ENCODE measurements at regions of chr10 and their contacts with region 1.

Region 1: DNA sequence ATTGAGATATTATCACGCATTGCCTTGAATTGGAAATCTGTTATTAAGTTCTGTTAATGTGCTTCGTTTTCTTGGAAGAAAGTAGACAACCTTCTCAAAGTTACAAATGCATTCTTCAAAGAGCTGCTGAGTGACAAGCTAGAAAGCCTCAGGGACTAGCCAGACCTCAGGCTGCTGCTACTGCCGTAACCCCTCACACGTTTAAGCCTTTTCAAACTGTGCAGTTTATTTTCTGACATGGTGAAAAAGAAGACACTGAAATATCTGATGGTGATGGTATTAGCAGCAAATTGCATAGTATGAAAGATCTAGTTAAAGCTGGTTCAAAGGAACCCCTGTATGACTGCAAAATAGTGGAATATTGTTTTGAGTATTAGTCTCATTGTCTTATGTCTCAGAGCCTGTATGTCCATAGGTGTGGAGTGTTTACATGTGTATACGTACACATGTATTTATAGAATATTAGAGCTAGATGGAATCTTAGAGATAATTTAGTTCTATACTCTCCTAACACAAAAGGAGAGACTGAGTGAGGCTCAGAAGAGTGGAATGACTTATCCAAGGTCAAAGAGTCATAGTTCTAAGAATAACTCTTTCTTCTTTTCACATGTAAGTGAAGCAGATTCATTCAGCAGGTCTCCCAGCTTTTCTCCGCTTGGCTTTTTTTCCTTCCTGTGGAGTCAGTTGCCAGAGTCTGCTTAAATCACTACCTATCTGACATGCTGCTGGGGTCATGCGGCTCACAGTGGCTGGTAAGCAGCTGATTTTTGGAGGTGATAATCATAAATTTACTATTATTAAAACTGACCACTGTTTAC is 431.9 kb downstream of the PLXDC2 start:
- DNase-seq: no peak
- ATAC-seq: no peak
- H3K4me3 ChIP-seq: no peak overlapping the region
- H3K27ac ChIP-seq: no peak overlapping the region
- H3K4me1 ChIP-seq: no peaks in the 10 kb centered on the region
- H3K27me3 ChIP-seq: no peaks in the 10 kb centered on the region
- CTCF ChIP-seq: no peak
- EP300 ChIP-seq: no peak
- POLR2A ChIP-seq: no peak
- RAD21 ChIP-seq: no peak

Region 2: DNA sequence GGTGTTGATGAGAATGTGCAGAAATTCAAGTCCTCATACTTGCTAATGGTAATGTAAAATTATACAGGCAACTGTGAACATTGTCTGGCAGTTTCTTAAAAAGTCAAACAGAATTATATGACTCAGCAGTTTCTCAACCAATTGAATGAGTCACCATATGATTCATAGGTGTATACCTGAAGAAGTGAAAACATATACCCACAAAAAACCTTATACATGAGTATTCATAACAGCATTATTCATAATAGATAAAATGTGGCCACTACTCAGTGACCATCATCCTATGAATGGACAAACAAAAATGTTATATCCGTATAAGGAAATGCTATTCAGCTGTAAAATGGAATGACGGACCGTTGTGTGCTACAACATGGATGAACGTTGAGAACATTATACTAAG is 946.0 kb before region 1 on chr10:
- CTCF ChIA-PET with region 1: no interaction called
- POLR2A ChIA-PET with region 1: no interaction called
- in situ Hi-C with region 1: no loop called
- intact Hi-C with region 1: no loop called
- DNase-seq: no peak
- ATAC-seq: no peak
- H3K4me3 ChIP-seq: no peak overlapping the region
- H3K27ac ChIP-seq: no peak overlapping the region
- H3K4me1 ChIP-seq: no peaks in the 10 kb centered on the region
- H3K27me3 ChIP-seq: no peaks in the 10 kb centered on the region
- CTCF ChIP-seq: no peak
- EP300 ChIP-seq: no peak
- POLR2A ChIP-seq: no peak
- RAD21 ChIP-seq: no peak

Region 3: DNA sequence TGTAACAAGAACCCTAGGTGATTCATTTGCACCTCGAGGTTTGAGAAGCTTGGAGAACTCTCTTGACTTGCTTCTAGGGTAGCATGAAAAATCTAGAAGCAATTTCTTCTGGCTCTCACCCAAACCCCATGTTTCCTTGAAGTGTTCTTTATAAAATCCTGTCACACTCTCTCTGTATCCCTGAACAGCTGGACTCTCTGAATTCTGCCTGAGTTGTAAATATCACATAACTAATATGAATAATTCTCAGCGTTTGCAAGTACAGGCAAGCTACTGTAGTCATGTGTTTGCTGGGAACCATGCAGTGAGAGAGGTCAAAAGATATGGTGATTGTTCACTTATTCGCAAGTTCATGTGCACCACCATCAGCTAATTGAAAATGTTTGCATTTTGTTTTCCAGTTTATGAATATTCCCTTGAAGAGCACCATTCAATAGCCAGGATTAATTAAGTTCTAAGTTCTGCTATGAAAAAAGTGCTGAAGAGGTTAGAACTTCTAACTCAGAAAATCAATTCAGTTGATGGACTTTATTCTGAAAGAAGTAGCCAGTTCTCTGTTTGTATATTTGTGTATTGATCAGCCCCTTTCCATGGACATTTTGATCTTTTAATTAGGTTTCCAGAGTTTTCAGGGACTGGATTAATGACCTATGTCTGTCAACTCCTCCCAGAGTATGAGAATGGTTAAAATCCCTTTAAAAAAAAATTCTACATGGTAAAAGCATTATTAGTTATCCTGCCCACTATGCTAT is 188.8 kb before region 1 on chr10:
- CTCF ChIA-PET with region 1: no interaction called
- POLR2A ChIA-PET with region 1: no interaction called
- in situ Hi-C with region 1: no loop called
- intact Hi-C with region 1: no loop called
- DNase-seq: no peak
- ATAC-seq: no peak
- H3K4me3 ChIP-seq: no peak overlapping the region
- H3K27ac ChIP-seq: no peak overlapping the region
- H3K4me1 ChIP-seq: no peaks in the 10 kb centered on the region
- H3K27me3 ChIP-seq: no peaks in the 10 kb centered on the region
- CTCF ChIP-seq: no peak
- EP300 ChIP-seq: no peak
- POLR2A ChIP-seq: no peak
- RAD21 ChIP-seq: no peak

Region 4: DNA sequence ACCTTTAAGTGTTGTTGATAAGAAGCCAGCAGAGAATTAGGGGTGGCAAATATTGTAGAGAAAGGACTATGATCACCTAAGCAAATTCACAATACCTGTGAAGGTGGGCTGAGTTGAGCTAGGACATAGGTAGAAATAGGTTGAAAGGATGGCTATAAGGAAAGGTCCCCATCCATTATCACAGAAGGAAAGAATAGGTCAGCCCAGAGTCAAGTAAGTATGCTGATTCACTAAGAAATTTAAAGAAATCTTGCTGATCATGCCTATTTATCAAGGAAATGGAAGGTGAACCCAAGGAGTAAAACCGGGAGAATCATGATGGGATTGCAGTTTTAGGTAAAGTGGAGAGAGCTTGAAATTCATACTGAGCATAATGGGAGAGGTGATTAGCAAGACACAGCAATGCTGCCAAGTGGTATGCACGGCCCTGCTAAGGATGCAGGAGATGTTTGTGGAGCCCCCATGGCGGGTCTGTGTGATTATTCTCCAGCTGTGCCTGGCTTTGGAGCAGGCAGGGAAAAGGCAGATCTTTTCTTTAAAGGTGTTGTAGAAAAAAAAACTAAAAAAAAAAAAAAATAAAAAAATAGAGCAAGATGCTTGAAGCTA is 32.5 kb before region 1 on chr10:
- CTCF ChIA-PET with region 1: no interaction called
- POLR2A ChIA-PET with region 1: no interaction called
- in situ Hi-C with region 1: no loop called
- intact Hi-C with region 1: loop called (anchors 1 kb)
- DNase-seq: no peak
- ATAC-seq: no peak
- H3K4me3 ChIP-seq: no peak overlapping the region
- H3K27ac ChIP-seq: no peak overlapping the region
- H3K4me1 ChIP-seq: no peaks in the 10 kb centered on the region
- H3K27me3 ChIP-seq: no peaks in the 10 kb centered on the region
- CTCF ChIP-seq: no peak
- EP300 ChIP-seq: no peak
- POLR2A ChIP-seq: no peak
- RAD21 ChIP-seq: no peak

Region 5: DNA sequence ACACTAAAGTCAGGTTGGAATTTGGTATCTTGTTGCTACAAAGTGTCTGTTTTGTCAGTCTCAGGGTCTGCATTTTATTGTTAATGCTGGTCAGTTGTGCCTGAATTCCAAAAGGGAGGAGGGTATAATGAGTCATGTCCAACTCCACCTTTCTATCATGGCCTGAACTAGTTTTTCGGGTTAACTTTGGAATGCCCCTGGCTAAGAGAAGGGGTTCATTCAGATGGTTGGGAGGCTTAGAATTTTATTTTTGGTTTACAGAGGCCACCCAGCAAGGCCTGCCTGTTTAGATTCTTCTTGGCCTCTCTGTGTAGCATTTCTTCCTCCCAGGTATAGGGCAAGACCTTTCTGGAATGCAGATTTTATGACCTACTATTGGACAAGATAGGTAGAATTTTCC is 1184.2 kb after region 1 on chr10:
- CTCF ChIA-PET with region 1: no interaction called
- POLR2A ChIA-PET with region 1: no interaction called
- in situ Hi-C with region 1: no loop called
- intact Hi-C with region 1: no loop called
- DNase-seq: no peak
- ATAC-seq: no peak
- H3K4me3 ChIP-seq: no peak overlapping the region
- H3K27ac ChIP-seq: no peak overlapping the region
- H3K4me1 ChIP-seq: peaks cover 14% of the 10 kb centered on the region
- H3K27me3 ChIP-seq: peaks cover 2 to 15% of the 10 kb centered on the region in 2 experiments; a peak in 3 of 5 replicates
- CTCF ChIP-seq: no peak
- EP300 ChIP-seq: no peak
- POLR2A ChIP-seq: no peak
- RAD21 ChIP-seq: no peak